HEK293 (cell line): ENCODE measurements at regions of chr16 and their contacts with region 1.

Region 1: GRCh38 chr16:75234856-75235696 is 16.3 kb downstream of the CTRB1 start:
- H3K4me3 ChIP-seq: no peak overlapping the region
- H3K27ac ChIP-seq: no peak overlapping the region
- H3K4me1 ChIP-seq: peaks cover 4% of the 10 kb centered on the region; the same call in 1 of the 2 replicates
- CTCF ChIP-seq: no peak

Region 2: GRCh38 chr16:75181630-75182029 is 53.4 kb before region 1 on chr16:
- CTCF ChIA-PET with region 1: no interaction called
- POLR2A ChIA-PET with region 1: no interaction called
- H3K4me3 ChIP-seq: no peak overlapping the region
- H3K27ac ChIP-seq: no peak overlapping the region
- H3K4me1 ChIP-seq: no peaks in the 10 kb centered on the region
- CTCF ChIP-seq: no peak

Region 3: GRCh38 chr16:75250809-75251279 is 15.8 kb after region 1 on chr16:
- CTCF ChIA-PET with region 1: interaction called, 17 read pairs
- POLR2A ChIA-PET with region 1: interaction called, 7 read pairs
- H3K4me3 ChIP-seq: peak overlapping the region; percentile 67
- H3K27ac ChIP-seq: peak overlapping the region; percentile 69; the same call in 1 of the 2 replicates
- H3K4me1 ChIP-seq: peaks cover 7% of the 10 kb centered on the region
- CTCF ChIP-seq: no peak

Region 4: DNA sequence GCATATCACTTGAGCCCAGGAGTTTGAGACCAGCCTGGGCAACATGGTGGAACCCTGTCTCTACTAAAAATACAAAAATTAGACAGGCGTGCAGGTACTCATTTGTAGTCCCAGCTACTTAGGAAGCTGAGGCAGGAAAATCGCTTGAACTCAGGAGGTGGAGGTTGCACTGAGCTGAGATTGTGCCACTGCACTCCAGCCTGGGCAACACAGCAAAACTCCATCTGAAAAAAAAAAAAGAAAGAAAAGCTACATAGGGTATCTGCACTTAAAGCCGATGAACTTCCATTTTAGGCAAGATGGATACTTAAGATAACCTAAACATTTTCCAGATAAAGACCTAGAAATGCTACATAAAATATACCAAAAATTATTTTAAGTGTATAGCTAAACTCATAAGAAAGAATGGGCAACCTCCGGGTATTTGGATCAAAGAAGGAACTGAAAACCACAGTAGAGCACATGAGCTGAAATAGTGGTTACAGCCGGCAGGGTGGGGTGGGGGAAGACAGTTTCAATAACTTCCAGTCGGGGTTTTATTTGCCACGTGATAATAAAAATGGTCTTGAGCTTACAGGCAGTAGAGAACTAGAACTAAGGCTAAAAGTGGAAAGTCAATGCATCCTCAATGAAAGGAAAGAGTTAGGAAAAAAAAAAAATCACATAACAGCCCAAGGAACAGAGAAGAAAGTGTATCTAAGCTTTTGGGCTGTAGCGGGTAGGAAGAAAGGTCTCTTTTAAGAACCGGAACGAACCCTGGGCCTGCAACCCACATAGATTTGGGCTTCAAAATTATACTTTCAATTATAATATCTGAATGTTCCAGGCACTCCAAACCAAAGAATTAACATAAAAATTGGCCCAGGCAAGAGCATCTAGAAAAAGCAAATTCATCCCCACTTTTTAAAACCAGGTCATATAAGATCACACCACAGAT is 145.1 kb after region 1 on chr16:
- CTCF ChIA-PET with region 1: interaction called, 15 read pairs
- POLR2A ChIA-PET with region 1: no interaction called
- H3K4me3 ChIP-seq: no peak overlapping the region
- H3K27ac ChIP-seq: no peak overlapping the region
- H3K4me1 ChIP-seq: no peaks in the 10 kb centered on the region
- CTCF ChIP-seq: no peak

Region 5: DNA sequence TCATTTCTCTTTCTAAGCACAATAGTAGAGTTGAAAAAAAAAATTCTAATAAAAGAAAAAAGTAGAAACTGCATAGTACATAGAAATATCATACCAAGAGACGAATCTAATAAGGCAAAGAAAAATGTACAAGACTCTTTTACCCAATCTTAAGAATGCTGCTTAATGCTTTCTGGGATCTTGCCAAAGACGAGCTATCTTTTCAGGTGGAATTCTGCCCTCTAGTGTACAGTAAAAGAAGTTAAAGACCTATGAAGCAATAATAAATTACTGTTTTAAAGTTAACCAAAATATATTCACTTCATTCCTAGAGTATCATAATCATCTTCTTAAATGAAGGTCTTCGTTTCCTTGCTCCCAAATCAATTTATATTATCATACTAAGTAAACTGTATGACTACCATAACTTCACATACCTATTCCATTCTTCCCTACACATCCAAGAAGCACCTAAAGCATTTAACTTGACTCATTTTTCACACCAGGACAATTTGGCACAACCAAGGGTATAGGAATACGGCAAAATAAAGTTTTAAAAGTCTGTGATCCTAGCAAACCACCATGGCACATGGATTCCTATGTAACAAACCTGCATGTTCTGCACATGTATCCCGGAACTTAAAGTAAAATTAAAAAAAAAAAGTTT is 150.6 kb after region 1 on chr16:
- CTCF ChIA-PET with region 1: interaction called, 15 read pairs
- POLR2A ChIA-PET with region 1: no interaction called
- H3K4me3 ChIP-seq: no peak overlapping the region
- H3K27ac ChIP-seq: no peak overlapping the region
- H3K4me1 ChIP-seq: no peaks in the 10 kb centered on the region
- CTCF ChIP-seq: 0 out of 2 replicates have a peak, but pooled peaks have one; percentile 24

Region 6: DNA sequence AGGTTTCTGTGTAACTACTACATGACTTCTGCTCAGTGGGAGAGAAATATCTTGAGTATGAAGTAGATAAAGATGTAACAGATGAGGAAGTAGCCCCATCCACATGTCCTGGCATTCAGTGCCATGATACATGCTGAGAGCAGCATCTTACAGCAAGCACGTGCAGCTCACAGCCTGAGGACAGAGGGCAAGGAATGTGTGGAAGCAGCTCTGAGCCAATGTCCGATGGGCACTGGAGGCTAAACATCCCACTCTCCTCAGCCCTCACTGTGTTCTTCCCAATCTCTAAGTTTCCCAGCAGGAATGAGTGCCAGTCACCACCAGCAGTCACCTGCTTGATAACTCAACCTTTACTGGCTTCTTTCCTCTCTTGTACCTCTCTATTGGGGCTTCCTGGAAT is 157.8 kb after region 1 on chr16:
- CTCF ChIA-PET with region 1: interaction called, 14 read pairs
- POLR2A ChIA-PET with region 1: no interaction called
- H3K4me3 ChIP-seq: no peak overlapping the region
- H3K27ac ChIP-seq: no peak overlapping the region
- H3K4me1 ChIP-seq: no peaks in the 10 kb centered on the region
- CTCF ChIP-seq: no peak

Region 7: DNA sequence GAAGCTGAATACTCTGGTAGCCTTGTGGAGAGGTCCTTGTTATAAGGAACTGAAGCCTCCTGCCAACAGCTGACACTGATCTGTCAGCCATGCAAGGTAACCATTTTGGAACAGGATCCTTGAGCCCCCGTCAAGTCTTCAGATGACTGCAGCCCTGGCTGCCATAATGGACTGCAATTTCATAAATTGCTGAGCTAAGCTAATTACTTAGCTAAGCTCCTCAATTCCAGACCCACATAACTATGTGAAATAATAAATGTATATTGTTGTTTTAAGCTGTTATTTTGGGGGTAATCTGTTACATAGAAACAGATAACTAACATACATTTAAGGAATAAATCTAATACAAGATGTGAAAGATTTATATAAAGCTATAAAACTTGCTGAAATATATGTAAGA is 371.4 kb after region 1 on chr16:
- CTCF ChIA-PET with region 1: no interaction called
- POLR2A ChIA-PET with region 1: no interaction called
- H3K4me3 ChIP-seq: no peak overlapping the region
- H3K27ac ChIP-seq: no peak overlapping the region
- H3K4me1 ChIP-seq: no peaks in the 10 kb centered on the region
- CTCF ChIP-seq: no peak